Activated CD8-positive, alpha-beta memory T cell treated with anti-CD3 and anti-CD28 coated beads, Interleukin-2, amount 10 ng/mL, durations not matched to agents 7 days and 5 days (primary cell): ENCODE measurements at regions of chr18 and their contacts with region 1.

Region 1: GRCh38 chr18:23619388-23619881 is 33.1 kb upstream of the NPC1 start:
- DNase-seq: no peak
- ATAC-seq: peak; percentile 62
- H3K4me3 Mint-ChIP-seq: peak overlapping the region; percentile 44
- H3K27ac Mint-ChIP-seq: no peak overlapping the region
- H3K4me1 Mint-ChIP-seq: peaks cover 6% of the 10 kb centered on the region
- H3K27me3 Mint-ChIP-seq: peaks cover 58% of the 10 kb centered on the region

Region 2: DNA sequence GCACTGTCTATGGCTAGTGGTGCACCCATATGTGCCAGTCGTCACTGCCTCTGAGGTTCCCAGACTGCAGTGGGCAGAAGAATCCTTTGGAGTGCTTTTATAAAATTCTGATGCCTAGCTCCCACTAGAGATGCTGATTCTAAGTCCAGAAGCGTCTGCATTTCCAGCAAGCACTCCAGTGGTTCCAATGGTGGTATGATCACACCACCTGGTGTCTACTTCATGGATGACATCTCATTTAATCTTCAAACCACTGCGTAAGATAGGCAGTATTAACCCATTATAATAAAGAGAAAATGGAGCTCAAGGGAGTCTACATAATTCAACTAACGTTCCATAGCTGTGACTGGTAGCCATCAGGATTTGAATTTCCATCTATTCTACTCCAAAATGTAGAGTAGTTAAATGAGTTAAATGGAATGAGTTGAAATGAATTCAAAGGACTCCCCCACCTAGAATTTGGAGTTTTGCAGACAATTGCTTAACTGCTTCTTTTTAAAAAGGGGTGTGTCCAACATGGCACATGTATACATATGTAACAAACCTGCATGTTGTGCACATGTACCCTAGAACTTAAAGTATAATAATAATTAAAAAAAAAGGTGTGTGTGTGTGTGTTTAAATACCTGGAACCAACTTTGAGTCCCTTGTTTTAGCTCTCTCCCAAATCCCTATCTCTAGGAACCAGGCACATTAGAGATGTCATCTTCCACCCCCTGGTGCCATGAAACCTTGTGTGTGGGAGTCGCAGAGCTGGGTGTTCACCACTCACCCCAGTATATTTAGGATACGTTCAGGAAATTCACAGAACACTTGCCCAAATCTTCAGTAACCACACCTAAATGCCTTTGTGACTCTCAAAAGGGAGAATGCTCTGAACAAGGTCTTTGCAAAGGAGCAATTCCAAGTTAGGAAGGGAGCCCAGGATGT is 83.9 kb after region 1 on chr18:
- CTCF ChIA-PET with region 1: interaction called, 25 read pairs
- DNase-seq: no peak
- ATAC-seq: no peak
- H3K4me3 Mint-ChIP-seq: no peak overlapping the region
- H3K27ac Mint-ChIP-seq: no peak overlapping the region
- H3K4me1 Mint-ChIP-seq: peaks cover 8% of the 10 kb centered on the region
- H3K27me3 Mint-ChIP-seq: peaks cover 51% of the 10 kb centered on the region

Region 3: DNA sequence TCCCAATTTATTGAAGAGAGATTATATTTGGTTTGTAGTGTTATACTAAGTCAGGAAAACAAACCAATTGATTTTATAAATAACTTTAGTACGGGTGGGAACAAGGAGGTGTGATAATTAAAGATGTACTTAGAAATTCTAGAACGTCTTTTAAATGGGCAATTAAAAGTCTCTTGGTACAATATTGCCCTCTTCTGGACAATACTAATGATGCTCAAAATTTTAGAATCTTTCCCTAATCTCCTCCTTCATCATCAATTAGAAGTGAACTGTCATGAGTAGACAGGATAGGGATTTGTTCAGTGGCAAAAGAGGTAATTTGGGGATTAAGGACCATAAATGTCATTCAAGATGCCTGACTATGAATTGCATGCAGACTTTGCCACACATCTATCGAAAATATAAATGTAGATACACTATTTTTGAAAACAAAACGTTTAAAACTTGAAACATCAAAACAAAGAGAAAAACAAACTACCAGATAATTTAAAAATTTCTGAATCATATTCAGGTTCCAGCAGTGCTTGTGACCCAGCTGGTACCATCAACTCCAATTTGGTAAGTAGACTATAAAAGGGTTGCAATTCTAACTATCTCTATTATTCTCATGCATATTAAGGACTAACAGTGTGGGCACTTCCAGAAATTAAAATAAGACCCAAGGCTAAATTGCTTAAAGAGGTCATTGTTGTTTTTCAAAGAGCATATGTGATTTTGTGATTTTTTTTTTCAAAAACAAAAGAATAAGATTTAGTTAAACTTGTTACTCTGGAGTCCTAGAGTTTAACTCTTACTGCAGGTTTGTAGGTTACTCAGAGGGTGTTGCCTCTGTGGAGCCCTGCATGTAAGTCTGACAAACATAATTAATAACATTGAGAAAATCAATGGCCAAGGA is 193.4 kb after region 1 on chr18:
- CTCF ChIA-PET with region 1: interaction called, 20 read pairs
- DNase-seq: no peak
- ATAC-seq: no peak
- H3K4me3 Mint-ChIP-seq: no peak overlapping the region
- H3K27ac Mint-ChIP-seq: no peak overlapping the region
- H3K4me1 Mint-ChIP-seq: peaks cover 32% of the 10 kb centered on the region
- H3K27me3 Mint-ChIP-seq: peaks cover 21% of the 10 kb centered on the region